ENCODE measurements at regions of chr21 and their contacts with region 1.

Region 1: GRCh38 chr21:32578107-32578692 is 7.1 kb downstream of the TCP10L start:
- DNase-seq: no peak
- CTCF ChIP-seq: peak; percentile 48

Region 2: DNA sequence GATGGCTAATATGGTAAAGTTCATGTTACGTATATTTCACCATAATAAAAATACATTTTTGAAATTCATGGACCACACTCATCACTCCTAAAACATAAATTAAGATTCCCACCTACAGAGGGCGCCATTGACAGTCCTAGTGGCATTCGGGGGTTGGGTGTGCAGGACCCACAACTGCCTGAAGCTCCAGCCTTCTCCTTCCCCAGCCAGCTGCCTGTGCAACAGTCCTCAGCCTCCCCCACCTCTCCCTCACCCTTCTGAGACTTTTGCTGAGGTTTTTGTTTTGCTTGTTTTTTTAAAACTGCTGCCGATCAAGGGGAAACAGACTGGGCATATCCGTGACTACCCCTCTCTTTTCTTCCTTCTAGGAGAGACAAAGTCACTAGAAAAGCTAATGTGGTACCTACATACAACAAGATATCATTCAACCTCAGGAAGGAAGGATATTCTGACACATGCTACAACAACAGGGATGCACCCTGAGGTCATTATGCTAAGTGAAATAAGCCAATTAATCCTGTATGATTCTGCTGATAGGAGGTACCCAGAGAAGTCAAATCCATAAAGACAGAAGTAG is 174.9 kb before region 1 on chr21:
- in situ Hi-C with region 1: loop called (anchors 25 kb)
- DNase-seq: peak; percentile 59
- CTCF ChIP-seq: peak; percentile 56